Activated CD4-positive, alpha-beta T cell treated with anti-CD3 and anti-CD28 coated beads for 36 hours (primary cell): ENCODE measurements at regions of chr4 and their contacts with region 1.

Region 1: GRCh38 chr4:76179398-76180318 is 31.5 kb upstream of the NUP54 start:
- DNase-seq: peak; percentile 93
- ATAC-seq: peak; percentile 97
- H3K4me3 Mint-ChIP-seq: no peak overlapping the region
- H3K27ac Mint-ChIP-seq: no peak overlapping the region
- H3K4me1 Mint-ChIP-seq: peaks cover 2% of the 10 kb centered on the region
- H3K27me3 Mint-ChIP-seq: no peaks in the 10 kb centered on the region

Region 2: GRCh38 chr4:76156635-76157034 is 23.0 kb before region 1 on chr4:
- CTCF ChIA-PET with region 1: interaction called, 22 read pairs
- POLR2A ChIA-PET with region 1: no interaction called
- intact Hi-C with region 1: no loop called
- DNase-seq: no peak
- ATAC-seq: no peak
- H3K4me3 Mint-ChIP-seq: no peak overlapping the region
- H3K27ac Mint-ChIP-seq: no peak overlapping the region
- H3K4me1 Mint-ChIP-seq: no peaks in the 10 kb centered on the region
- H3K27me3 Mint-ChIP-seq: no peaks in the 10 kb centered on the region

Region 3: DNA sequence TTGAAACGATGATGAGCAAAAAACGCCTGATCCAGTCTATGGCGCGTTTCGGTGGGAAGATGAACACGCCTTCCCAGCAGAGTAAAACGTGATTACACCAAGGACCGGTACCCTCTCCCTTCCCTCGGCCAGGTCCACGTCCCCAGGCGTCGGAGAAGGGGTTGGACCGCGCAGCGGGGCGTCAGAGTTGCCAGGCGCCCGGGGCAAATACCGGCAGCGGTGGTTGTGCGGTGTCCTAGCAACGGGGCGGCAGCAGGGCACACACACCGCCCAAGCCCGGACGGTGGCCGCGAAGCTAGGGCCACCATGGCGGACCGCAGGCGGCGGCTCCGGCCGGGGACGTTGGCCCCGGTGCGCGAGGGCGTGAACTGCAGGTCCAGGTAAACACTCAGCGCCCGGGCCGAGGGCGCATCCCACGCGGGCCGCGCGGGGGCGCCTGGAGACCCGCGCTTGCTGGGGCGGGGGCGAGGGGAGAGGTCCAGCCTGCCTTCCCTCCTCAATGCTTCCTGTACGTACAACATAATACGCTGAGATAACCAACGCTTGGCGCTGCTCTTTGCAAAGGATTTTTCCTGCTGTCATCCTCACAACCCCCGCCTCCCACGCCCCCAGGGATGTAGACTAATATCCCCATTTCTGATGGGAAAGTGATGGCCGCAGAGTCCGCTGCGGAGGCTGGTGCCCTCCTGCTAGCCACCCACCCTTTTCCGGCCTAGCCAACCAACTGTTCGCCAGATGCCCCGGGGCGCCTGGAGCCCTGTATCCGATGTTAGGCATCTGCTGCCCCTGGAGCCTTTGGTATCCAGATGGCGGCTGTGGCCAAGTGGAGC is 72.0 kb after region 1 on chr4 and contains the start of gene FAM47E:
- CTCF ChIA-PET with region 1: interaction called, 5 read pairs
- POLR2A ChIA-PET with region 1: no interaction called
- intact Hi-C with region 1: loop called in 1 of 2 experiments (anchors 5 kb)
- DNase-seq: peak; percentile 60
- ATAC-seq: peak; percentile 79
- H3K4me3 Mint-ChIP-seq: peak within 1 kb of the TSS; percentile 62
- H3K27ac Mint-ChIP-seq: peak within 1 kb of the TSS; percentile 17
- H3K4me1 Mint-ChIP-seq: peaks cover 6% of the 10 kb centered on the region
- H3K27me3 Mint-ChIP-seq: peaks cover 61% of the 10 kb centered on the region
- total RNA-seq, gene FAM47E: not detected

Region 4: GRCh38 chr4:76279472-76279871 is 99.8 kb after region 1 on chr4:
- CTCF ChIA-PET with region 1: interaction called, 11 read pairs
- POLR2A ChIA-PET with region 1: no interaction called
- intact Hi-C with region 1: no loop called
- DNase-seq: peak; percentile 54
- ATAC-seq: no peak
- H3K4me3 Mint-ChIP-seq: no peak overlapping the region
- H3K27ac Mint-ChIP-seq: no peak overlapping the region
- H3K4me1 Mint-ChIP-seq: no peaks in the 10 kb centered on the region
- H3K27me3 Mint-ChIP-seq: peaks cover 5% of the 10 kb centered on the region

Region 5: DNA sequence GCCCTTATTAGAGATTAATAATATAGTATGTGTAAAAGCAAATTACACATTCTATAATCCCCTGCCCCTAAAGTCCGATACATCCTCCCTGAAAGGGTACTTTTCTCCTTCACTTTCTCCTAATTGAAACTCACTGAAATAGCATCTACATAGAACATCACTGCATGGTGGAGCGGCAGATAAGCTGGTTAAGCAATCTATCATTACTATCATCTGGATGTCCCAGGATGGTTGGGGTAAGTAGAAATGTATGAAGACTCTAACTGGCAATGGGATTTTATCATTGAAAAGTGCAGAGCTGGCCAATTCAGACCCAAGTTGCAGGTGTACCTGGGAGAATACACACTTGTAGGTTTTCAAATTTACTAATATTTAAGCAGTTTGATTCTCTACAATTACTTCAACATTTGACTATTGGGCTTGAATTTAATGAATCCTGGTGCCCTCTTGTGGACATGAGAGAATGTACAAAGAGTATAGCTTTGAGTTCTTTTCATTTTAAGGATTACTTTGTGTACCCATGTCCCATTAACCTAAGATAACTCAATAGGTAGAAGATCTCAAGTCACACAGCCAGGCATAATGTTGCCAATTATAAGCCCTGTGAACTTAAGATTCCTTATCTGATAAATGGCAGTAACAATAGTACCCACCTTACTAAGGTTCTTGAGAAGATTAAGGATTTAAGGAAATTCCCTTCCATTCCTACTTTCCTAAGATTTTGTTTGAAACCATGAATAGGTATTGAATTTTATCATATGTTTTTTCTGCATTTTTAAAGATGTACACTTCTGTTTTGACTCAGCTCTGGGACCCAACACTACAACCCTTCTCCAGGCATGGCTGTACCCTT is 325.2 kb after region 1 on chr4:
- CTCF ChIA-PET with region 1: interaction called, 14 read pairs
- POLR2A ChIA-PET with region 1: no interaction called
- intact Hi-C with region 1: loop called (anchors 1 to 2 kb)
- DNase-seq: no peak
- ATAC-seq: peak; percentile 60
- H3K4me3 Mint-ChIP-seq: no peak overlapping the region
- H3K27ac Mint-ChIP-seq: no peak overlapping the region
- H3K4me1 Mint-ChIP-seq: no peaks in the 10 kb centered on the region
- H3K27me3 Mint-ChIP-seq: peaks cover 7% of the 10 kb centered on the region